ENCODE measurements at regions of chr18 and their contacts with region 1.

Region 1: DNA sequence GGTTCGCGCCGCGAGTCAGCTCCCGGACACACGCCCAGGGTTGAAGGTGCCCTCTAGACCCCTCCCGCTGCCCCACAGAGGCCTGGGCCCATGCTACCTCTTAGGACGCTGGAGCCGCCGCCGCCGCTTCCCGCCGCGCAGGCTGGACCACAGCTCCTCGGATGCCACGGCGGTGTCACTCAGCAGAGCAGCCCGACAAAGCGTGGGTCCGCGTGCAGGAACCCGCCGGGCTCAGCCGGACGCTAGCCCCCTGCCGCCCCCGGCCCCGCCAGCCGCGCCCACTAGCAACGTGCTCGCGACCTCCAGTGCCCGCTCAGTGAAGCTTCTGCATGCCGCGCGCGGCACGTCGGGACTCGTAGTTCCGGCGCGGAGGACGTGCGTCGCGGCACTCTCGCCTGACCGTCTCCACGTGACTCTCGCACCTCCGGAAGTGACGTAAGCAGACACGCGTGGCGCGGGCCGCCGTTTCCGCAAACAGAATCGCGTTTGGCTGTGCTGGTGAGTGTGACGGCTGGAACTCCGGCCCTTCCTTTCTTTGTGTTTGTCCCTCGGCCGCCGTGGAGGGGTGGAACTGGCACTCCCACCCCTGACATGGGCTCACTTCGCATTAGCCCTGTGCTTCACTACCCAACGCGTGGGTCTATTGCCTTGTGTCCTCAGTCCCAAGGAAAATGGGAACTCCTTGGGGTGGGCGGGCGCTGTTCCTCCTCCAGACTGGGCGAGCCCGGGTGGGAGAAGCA is at the starts of genes FAM210A and RNMT:
- DNase-seq: peak; percentile 93 to 94
- ATAC-seq: peak; percentile 93 to 96
- H3K4me3 ChIP-seq: peak within 1 kb of the TSS; percentile 74 to 88 (median 81)
- H3K27ac ChIP-seq: peak within 1 kb of the TSS; percentile 93 to 98 (median 96)
- H3K4me1 ChIP-seq: peaks cover 25 to 34% of the 10 kb centered on the region in 2 donors
- H3K27me3 ChIP-seq: no peaks in the 10 kb centered on the region
- CTCF ChIP-seq: peak in 1 of 5 experiments; percentile 22
- POLR2A ChIP-seq: peak; percentile 83 to 88
- total RNA-seq, gene FAM210A: 7.8 to 23.1 (median 16.3) TPM
- total RNA-seq, gene RNMT: 12.9 to 24.1 (median 18.6) TPM

Region 2: DNA sequence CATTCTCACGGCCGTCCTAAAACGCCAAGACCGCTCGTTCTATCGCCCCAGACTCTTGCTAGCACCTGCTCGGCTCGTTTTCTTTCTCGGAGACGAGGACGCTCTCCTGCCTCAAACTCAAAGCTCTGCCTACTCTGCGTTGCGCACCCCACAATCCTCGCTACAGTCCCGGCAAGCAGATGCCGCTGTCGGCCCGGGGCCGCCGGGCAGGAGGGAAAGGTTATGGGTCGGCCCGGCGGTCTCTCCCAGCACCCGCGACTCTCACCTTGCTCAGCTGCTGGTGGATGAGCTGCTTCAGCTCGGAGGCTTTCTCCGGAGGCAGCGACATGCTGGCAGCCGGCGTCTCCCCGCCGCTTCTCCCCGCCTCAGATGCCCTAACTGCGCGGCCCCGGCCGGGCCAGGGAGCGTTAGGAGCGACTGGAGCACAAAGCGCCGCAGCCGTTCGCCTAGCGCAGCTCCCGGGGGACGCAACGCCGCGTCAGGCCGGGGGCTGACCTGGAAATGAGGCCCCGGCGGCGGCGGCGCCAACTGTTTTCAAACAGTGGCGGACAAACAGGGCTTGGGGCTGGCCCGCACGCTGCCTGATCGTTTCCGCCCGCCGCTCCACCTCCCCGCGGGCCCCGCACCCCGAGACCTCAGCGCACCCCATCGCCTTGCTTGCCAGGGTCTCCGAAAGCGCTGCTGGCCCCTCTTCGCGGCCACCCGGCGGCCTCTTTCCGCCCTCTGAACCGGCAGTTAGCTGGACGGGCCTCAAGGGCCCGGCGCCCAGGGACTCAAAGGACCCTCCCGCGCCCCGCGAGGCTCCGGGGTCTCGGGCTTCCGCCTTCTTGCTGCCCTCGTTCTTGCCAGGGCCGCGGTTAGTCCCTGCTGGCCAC is 1023.9 kb before region 1 on chr18 and contains the starts of genes CEP76 and PSMG2:
- in situ Hi-C with region 1: loop called in 1 of 4 experiments (anchors 25 kb)
- intact Hi-C with region 1: loop called (anchors 10 kb)
- DNase-seq: peak; percentile 76 to 87
- ATAC-seq: peak; percentile 95 to 96
- H3K4me3 ChIP-seq: peak within 1 kb of the TSS; percentile 72 to 99 (median 94)
- H3K27ac ChIP-seq: peak within 1 kb of the TSS; percentile 95 to 99 (median 98)
- H3K4me1 ChIP-seq: peaks cover 28 to 29% of the 10 kb centered on the region in 2 donors
- H3K27me3 ChIP-seq: no peaks in the 10 kb centered on the region
- CTCF ChIP-seq: peak in 2 of 5 experiments; percentile 6 to 16
- POLR2A ChIP-seq: peak; percentile 76 to 84
- total RNA-seq, gene CEP76: 5.4 to 9.1 (median 6.8) TPM
- total RNA-seq, gene PSMG2: 49.6 to 94.2 (median 63.4) TPM

Region 3: DNA sequence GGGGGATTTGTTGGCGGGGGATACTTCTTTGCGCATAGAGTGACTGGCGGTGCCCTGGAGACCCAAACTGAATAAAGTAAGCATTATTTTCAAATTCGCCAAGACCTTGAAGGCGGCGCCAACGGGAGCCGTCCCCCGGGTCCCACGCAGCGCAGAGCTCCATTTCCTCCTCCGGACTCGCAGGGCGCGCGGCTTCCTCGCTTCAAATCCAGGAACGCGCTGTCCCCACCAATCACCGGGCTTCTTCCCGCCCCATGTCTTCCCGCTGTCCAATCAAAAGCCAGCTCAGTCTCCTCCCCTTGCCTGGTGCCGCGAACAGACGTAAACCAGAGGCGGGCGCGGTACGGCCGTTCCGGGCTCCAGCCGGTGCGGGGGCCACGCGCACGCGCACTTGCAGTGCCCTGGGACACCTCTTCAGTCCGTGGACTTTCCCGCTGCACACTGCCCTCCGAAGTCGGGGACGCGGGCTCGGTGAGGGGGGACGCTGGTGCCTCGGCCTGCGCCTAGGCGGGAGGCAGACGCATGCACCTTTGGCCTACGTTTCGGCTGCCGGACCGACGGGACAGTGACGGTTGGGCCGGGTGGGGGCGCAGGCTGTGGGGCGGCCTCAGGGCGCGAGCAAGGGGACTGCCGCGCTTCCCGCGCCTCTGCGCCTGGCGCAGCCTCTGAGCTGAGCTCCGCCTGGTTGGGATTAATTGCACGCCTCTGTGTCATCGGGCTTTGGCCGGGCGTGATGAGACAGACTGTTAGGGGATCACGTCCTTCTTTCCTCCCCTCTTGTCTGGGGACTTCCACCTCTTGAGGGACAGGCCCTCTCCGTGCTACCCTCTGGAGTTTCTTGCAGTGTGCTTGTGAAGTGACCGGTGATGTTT is 735.2 kb before region 1 on chr18 and contains the start of gene CEP192:
- in situ Hi-C with region 1: no loop called
- intact Hi-C with region 1: loop called (anchors 2 kb)
- DNase-seq: peak; percentile 98
- ATAC-seq: peak; percentile 97
- H3K4me3 ChIP-seq: peak within 1 kb of the TSS; percentile 81 to 95 (median 90)
- H3K27ac ChIP-seq: peak within 1 kb of the TSS; percentile 87 to 93 (median 92)
- H3K4me1 ChIP-seq: peaks cover 33 to 47% of the 10 kb centered on the region in 2 donors
- H3K27me3 ChIP-seq: no peaks in the 10 kb centered on the region
- CTCF ChIP-seq: peak in 1 of 5 experiments; percentile 10
- POLR2A ChIP-seq: peak; percentile 84 to 94
- total RNA-seq, gene CEP192: 6.8 to 8.3 (median 7.3) TPM

Region 4: GRCh38 chr18:13520306-13520705 is 206.1 kb before region 1 on chr18:
- in situ Hi-C with region 1: no loop called
- intact Hi-C with region 1: loop called (anchors 5 kb)
- DNase-seq: peak; percentile 83 to 89
- ATAC-seq: peak; percentile 95 to 96
- H3K4me3 ChIP-seq: no peak overlapping the region
- H3K27ac ChIP-seq: peak overlapping the region; percentile 73 to 91 (median 83)
- H3K4me1 ChIP-seq: peaks cover 45 to 56% of the 10 kb centered on the region in 2 donors
- H3K27me3 ChIP-seq: no peaks in the 10 kb centered on the region
- CTCF ChIP-seq: no peak
- POLR2A ChIP-seq: peak in 1 of 2 donors; percentile 47

Region 5: GRCh38 chr18:13611601-13612195 is 114.7 kb before region 1 on chr18:
- in situ Hi-C with region 1: no loop called
- intact Hi-C with region 1: loop called (anchors 1 kb)
- DNase-seq: peak in 1 of 2 donors; percentile 25
- ATAC-seq: peak; percentile 42
- H3K4me3 ChIP-seq: peak overlapping the region; percentile 48 to 61 (median 58)
- H3K27ac ChIP-seq: peak overlapping the region; percentile 43 to 77 (median 68)
- H3K4me1 ChIP-seq: peaks cover 28 to 32% of the 10 kb centered on the region in 2 donors
- H3K27me3 ChIP-seq: no peaks in the 10 kb centered on the region
- CTCF ChIP-seq: no peak
- POLR2A ChIP-seq: no peak

Region 6: DNA sequence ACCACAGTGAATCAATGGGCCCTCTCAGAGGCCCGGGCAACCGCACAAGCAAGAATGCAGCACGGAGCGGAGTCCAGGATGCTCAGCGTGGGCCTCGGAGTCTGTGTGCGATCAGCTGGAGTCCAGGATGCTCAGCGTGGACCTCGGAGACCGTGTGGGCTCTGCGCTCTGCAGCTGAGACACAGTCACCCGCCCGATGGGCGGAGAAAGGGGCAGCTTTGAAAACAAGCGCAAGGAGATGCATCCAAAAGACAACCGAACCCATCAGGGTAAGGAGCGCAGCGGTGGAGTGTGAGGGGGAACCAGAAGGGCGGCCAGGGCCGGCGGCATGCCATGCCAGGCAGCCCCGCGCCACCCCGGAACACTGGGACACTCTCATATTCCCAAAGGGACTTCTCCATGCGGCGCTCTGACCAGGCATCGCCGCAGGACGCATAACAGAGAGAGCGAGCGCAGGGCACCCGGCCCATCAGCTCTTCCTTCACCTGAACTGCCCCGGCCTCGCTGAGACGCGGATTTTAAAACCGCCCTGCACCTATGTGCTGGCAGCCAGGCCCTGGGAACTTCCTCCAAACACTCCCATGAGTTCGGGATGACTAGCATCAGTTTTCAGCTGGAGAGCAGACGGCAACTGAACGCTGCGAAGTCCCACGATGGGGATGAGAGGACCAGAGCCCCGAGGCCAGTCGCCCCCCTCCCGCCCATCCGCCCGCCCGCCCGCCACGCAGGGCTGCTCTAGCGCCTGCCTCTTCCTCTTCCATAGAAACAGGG is 142.3 kb after region 1 on chr18:
- in situ Hi-C with region 1: no loop called
- intact Hi-C with region 1: no loop called
- DNase-seq: no peak
- ATAC-seq: no peak
- H3K4me3 ChIP-seq: no peak overlapping the region
- H3K27ac ChIP-seq: no peak overlapping the region
- H3K4me1 ChIP-seq: no peaks in the 10 kb centered on the region
- H3K27me3 ChIP-seq: peaks cover 10 to 29% (median 15%) of the 10 kb centered on the region in 3 donors
- CTCF ChIP-seq: no peak
- POLR2A ChIP-seq: no peak